B cell (primary cell): ENCODE measurements at regions of chr2 and their contacts with region 1.

Region 1: DNA sequence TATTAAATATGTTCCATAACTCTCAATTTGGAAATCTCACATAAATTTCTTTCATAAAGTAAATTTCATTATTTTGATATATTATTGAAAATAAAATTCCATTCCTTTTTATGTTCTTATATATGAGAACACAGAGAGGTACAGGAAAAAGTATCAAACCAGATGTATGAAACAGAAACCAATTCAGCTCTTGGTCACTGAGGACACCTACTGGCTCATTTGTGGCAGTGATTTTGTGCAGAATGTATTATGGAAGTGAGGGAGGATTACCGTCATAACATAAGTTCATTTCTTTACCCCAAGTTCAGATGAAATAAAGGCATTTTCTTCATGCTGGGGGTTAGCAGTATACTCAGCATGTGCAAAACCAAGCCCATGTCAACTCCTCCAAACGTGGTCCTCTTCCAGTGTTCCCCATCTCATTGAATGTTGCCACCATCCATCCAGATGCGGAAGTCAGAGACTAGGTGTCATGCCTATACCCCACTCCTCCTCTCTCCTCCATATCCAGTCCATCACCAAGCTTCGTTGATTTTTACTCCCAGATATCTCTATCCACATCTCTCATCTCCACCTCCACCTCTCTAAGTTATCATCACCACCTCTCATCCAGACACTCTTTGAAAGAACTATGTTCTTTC is 41.7 kb upstream of the MALL start:
- DNase-seq: peak; percentile 35
- ATAC-seq: no peak
- H3K4me3 ChIP-seq: no peak overlapping the region
- H3K4me3 Mint-ChIP-seq: no peak overlapping the region
- H3K27ac ChIP-seq: no peak overlapping the region
- H3K27ac Mint-ChIP-seq: no peak overlapping the region
- H3K4me1 ChIP-seq: no peaks in the 10 kb centered on the region
- H3K4me1 Mint-ChIP-seq: peaks cover 2% of the 10 kb centered on the region
- H3K27me3 ChIP-seq: no peaks in the 10 kb centered on the region
- H3K27me3 Mint-ChIP-seq: peaks cover 3% of the 10 kb centered on the region
- CTCF ChIP-seq: peak; percentile 67

Region 2: DNA sequence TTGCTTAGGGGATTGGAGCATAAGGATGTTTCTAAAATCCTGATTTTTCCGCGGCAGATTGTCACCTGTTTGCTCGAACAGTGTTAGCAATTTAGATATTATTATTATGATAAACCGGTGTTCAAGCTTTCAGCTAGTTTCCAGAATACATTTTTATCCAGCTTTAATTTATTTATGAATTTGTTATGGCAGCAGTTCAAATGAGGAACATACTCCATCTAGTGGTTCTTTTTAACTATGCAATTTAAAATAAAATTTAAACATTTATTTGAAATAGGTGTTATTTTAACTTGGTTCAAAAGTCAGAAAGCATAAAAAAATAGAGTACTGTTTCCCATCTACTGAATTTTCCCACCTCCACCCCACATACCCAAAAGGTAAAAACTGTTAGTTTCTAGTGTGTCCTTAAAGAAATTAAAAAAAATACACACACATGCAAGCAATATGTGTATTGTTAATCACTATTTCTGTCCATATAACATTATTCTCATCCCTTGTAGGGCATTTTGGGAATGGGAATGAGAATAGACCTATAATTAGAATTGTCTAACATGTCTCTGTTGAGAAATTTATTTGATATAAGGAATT is 598.3 kb after region 1 on chr2:
- CTCF ChIA-PET with region 1: interaction called, 3 read pairs
- POLR2A ChIA-PET with region 1: no interaction called
- intact Hi-C with region 1: loop called (anchors 5 kb)
- DNase-seq: peak; percentile 33
- ATAC-seq: no peak
- H3K4me3 ChIP-seq: no peak overlapping the region
- H3K4me3 Mint-ChIP-seq: no peak overlapping the region
- H3K27ac ChIP-seq: no peak overlapping the region
- H3K27ac Mint-ChIP-seq: no peak overlapping the region
- H3K4me1 ChIP-seq: no peaks in the 10 kb centered on the region
- H3K4me1 Mint-ChIP-seq: no peaks in the 10 kb centered on the region
- H3K27me3 ChIP-seq: peaks cover 0 to 7% (median 4%) of the 10 kb centered on the region in 4 experiments
- H3K27me3 Mint-ChIP-seq: peaks cover 48% of the 10 kb centered on the region
- CTCF ChIP-seq: peak; percentile 85